ENCODE measurements at regions of chr21 and their contacts with region 1.

Region 1: GRCh38 chr21:15140321-15141019 is 75.7 kb upstream of the NRIP1 start:
- DNase-seq: peak; percentile 99
- ATAC-seq: peak; percentile 96
- H3K4me3 ChIP-seq: peak overlapping the region in 2 of 3 experiments; percentile 7 to 26; a peak in 3 of 6 replicates
- H3K27ac ChIP-seq: peak overlapping the region; percentile 90
- H3K4me1 ChIP-seq: peaks cover 50% of the 10 kb centered on the region
- H3K27me3 ChIP-seq: no peaks in the 10 kb centered on the region
- CTCF ChIP-seq: no peak; the same call in 1 of the 2 replicates
- EP300 ChIP-seq: peak; percentile 94 to 99
- POLR2A ChIP-seq: peak; percentile 42 to 61; a peak in 1 of 4 replicates
- RAD21 ChIP-seq: peak; percentile 61

Region 2: DNA sequence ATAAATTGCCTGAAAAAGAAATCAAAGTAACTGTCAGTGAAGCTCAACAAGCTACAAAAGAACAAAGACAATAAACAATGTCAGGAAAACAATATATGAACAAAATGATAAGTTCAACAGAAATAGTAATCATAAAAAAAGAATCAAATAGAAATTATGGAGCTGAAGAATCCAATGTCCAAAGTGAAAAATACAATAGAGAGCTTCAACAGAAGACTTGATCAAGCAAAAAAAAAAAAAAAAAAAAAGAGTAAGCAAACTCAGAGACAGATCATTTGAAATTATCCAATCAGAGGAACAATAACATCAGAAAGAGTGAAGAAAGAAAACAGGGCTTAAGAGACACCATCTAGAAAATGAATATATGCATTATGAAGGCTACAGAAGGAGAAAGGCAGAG is 342.9 kb before region 1 on chr21:
- CTCF ChIA-PET with region 1: no interaction called
- POLR2A ChIA-PET with region 1: no interaction called
- in situ Hi-C with region 1: no loop called
- intact Hi-C with region 1: no loop called
- DNase-seq: no peak
- ATAC-seq: no peak
- H3K4me3 ChIP-seq: no peak overlapping the region
- H3K27ac ChIP-seq: no peak overlapping the region
- H3K4me1 ChIP-seq: no peaks in the 10 kb centered on the region
- H3K27me3 ChIP-seq: no peaks in the 10 kb centered on the region
- CTCF ChIP-seq: no peak
- EP300 ChIP-seq: no peak
- POLR2A ChIP-seq: no peak
- RAD21 ChIP-seq: no peak

Region 3: DNA sequence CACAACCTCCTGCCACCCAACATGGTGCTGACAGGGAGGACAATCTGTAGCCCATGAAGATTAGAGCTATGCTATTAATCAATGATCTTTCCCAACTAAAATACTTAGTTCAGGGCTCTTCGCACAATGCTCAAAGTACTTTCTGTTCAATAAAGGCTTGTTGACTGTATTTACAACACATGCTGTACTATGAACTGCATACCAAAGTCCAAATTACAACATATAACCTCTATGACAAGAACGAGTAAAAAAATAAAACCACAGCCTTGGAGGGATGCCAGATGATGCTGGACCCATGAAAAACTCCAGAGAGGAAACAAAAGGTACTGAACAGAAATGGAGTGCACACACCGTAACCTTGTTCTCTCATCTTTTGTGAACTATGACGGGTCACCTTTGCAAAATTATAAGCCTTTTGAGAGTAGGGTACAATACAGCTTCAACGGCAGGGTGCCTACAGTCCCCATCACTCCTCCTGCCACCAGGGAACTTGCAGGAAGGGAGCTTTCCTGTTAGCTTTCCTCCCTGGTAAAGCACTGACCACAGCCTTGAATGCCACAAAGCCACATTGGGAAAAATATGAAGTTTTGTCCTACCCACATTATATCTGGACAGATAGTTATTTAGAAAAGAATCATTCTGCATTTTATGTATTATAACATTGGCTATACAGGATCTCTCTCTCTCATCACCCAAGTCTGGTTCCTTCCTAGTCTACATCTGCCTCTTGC is 251.2 kb before region 1 on chr21:
- CTCF ChIA-PET with region 1: no interaction called
- POLR2A ChIA-PET with region 1: interaction called, 13 read pairs
- in situ Hi-C with region 1: no loop called
- intact Hi-C with region 1: no loop called
- DNase-seq: peak; percentile 92
- ATAC-seq: peak; percentile 91
- H3K4me3 ChIP-seq: peak overlapping the region in 1 of 3 experiments; percentile 18; a peak in 1 of 6 replicates
- H3K27ac ChIP-seq: peak overlapping the region; percentile 83
- H3K4me1 ChIP-seq: peaks cover 39% of the 10 kb centered on the region
- H3K27me3 ChIP-seq: no peaks in the 10 kb centered on the region
- CTCF ChIP-seq: no peak
- EP300 ChIP-seq: peak; percentile 97 to 98
- POLR2A ChIP-seq: no peak
- RAD21 ChIP-seq: 0 out of 2 replicates have a peak, but pooled peaks have one; percentile 31

Region 4: GRCh38 chr21:15001857-15002606 is 138.4 kb before region 1 on chr21:
- CTCF ChIA-PET with region 1: no interaction called
- POLR2A ChIA-PET with region 1: no interaction called
- in situ Hi-C with region 1: no loop called
- intact Hi-C with region 1: no loop called
- DNase-seq: no peak
- ATAC-seq: no peak
- H3K4me3 ChIP-seq: no peak overlapping the region
- H3K27ac ChIP-seq: no peak overlapping the region
- H3K4me1 ChIP-seq: peaks cover 97% of the 10 kb centered on the region
- H3K27me3 ChIP-seq: no peaks in the 10 kb centered on the region
- CTCF ChIP-seq: no peak
- EP300 ChIP-seq: no peak
- POLR2A ChIP-seq: no peak
- RAD21 ChIP-seq: no peak

Region 5: DNA sequence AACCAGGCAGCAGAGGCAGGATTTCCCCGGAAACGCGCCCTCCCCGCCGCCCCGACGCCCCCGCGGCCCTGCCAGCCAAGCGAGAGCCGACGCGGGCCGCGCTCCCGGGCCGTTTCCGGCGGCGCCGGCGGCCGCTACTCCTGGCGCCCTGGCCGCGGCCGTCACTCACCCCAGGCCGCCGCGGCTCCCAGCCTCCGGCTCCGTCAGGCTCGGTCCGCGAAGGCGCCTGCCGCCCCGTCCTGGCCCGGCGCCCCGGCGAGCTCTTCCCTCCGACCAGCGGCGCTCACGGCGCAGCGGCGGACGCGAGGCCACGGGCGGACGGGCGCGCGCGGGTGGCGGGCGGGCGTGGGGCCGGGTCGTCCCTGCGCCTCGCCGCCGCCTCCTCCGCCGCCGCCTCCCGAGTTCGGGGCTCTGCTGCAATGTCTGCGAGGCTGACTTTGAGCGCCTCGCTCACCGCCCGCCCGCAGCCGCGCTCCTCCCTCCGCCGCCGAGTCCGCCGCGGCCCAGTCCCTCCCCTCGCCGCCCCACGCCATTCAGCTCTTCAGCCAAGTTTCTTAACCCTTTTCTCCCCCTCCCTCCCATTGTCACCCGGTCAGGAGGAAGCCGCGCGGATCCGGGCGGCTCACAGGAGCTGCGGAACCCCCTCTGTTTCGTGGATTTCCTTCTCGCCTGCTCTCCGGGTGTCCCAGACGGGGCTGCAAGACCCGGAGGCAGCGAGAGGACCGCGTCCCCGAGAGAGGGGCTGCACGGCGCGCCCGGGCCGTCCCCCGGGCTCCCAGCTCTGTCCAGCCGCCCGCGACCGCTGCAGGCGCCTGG is 75.7 kb before region 1 on chr21 and contains the start of gene NRIP1:
- CTCF ChIA-PET with region 1: no interaction called
- POLR2A ChIA-PET with region 1: interaction called, 33 read pairs
- in situ Hi-C with region 1: no loop called
- intact Hi-C with region 1: loop called (anchors 1 kb)
- DNase-seq: peak; percentile 78
- ATAC-seq: peak; percentile 92
- H3K4me3 ChIP-seq: peak within 1 kb of the TSS; percentile 83 to 95 (median 92)
- H3K27ac ChIP-seq: peak within 1 kb of the TSS; percentile 95
- H3K4me1 ChIP-seq: peaks cover 45% of the 10 kb centered on the region
- H3K27me3 ChIP-seq: peaks cover 0 to 4% of the 10 kb centered on the region in 2 experiments; a peak in 1 of 5 replicates
- CTCF ChIP-seq: no peak
- EP300 ChIP-seq: 0 out of 4 replicates have a peak, but pooled peaks of 1 of the 2 experiments have one; percentile 11
- POLR2A ChIP-seq: peak; percentile 28 to 75; a peak in 3 of 4 replicates
- RAD21 ChIP-seq: peak; percentile 33
- total RNA-seq, gene NRIP1: 69.0 and 99.0 TPM in 2 replicates

Region 6: DNA sequence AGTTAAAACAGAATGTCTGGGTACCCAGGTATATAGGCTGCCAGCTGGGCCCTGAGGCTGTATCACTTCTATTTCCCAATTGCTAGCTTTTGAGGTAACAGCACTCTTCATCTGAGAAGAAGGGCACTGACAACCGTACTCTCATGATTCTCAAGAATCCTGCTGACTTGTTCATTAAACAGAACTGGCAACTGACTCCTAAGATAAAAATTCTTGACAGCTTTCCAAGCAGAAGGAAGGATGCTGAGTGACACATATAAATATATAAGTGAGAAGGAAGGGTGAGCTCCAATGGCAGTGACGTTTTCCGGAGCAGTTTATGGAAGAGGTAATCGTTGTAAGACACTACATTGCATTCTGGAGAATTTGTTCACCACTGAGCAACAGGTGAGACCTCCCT is 27.6 kb before region 1 on chr21:
- CTCF ChIA-PET with region 1: no interaction called
- POLR2A ChIA-PET with region 1: no interaction called
- in situ Hi-C with region 1: no loop called
- intact Hi-C with region 1: no loop called
- DNase-seq: no peak
- ATAC-seq: no peak
- H3K4me3 ChIP-seq: no peak overlapping the region
- H3K27ac ChIP-seq: no peak overlapping the region
- H3K4me1 ChIP-seq: no peaks in the 10 kb centered on the region
- H3K27me3 ChIP-seq: no peaks in the 10 kb centered on the region; a peak in 1 of 5 replicates
- CTCF ChIP-seq: no peak
- EP300 ChIP-seq: no peak
- POLR2A ChIP-seq: no peak
- RAD21 ChIP-seq: no peak

Region 7: GRCh38 chr21:15164678-15165303 is 24.3 kb after region 1 on chr21:
- CTCF ChIA-PET with region 1: no interaction called
- POLR2A ChIA-PET with region 1: interaction called, 14 read pairs
- in situ Hi-C with region 1: no loop called
- intact Hi-C with region 1: loop called (anchors 1 kb)
- DNase-seq: peak; percentile 49
- ATAC-seq: peak; percentile 60; the same call in 2 of the 3 replicates
- H3K4me3 ChIP-seq: no peak overlapping the region
- H3K27ac ChIP-seq: no peak overlapping the region
- H3K4me1 ChIP-seq: peaks cover 19% of the 10 kb centered on the region
- H3K27me3 ChIP-seq: no peaks in the 10 kb centered on the region; a peak in 1 of 5 replicates
- CTCF ChIP-seq: no peak
- EP300 ChIP-seq: peak in 1 of 2 experiments; percentile 83; a peak in 2 of 4 replicates
- POLR2A ChIP-seq: no peak
- RAD21 ChIP-seq: no peak

Region 8: GRCh38 chr21:15445327-15445726 is 304.9 kb after region 1 on chr21:
- CTCF ChIA-PET with region 1: no interaction called
- POLR2A ChIA-PET with region 1: interaction called, 4 read pairs
- in situ Hi-C with region 1: loop called (anchors 10 kb)
- intact Hi-C with region 1: loop called (anchors 2 kb)
- DNase-seq: no peak
- ATAC-seq: no peak
- H3K4me3 ChIP-seq: no peak overlapping the region
- H3K27ac ChIP-seq: peak overlapping the region; percentile 93
- H3K4me1 ChIP-seq: peaks cover 61% of the 10 kb centered on the region
- H3K27me3 ChIP-seq: no peaks in the 10 kb centered on the region
- CTCF ChIP-seq: no peak
- EP300 ChIP-seq: no peak
- POLR2A ChIP-seq: no peak
- RAD21 ChIP-seq: no peak